ENCODE measurements at regions of chr4 and their contacts with region 1.

Region 1: DNA sequence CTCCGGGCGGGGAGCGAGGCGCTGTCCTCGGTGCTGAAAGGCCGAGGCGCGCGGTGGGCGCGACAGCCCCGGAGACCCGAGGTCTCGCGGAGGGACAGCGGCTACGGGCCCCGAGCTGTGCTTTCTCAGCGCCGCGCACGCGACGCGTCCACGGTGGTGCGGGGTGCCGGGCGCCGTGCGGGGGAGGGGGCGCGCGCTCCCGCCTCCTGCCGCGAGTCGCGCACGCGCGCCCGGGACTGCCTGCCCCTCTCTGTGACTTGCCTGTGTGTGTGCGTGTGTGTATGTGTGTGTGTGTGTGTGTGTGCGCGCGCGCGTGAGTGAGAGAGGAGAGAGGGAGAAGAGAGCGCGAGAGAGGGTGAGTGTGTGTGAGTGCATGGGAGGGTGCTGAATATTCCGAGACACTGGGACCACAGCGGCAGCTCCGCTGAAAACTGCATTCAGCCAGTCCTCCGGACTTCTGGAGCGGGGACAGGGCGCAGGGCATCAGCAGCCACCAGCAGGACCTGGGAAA is at the start of gene GRIA2:
- DNase-seq: peak; percentile 72 to 92
- ATAC-seq: peak; percentile 88
- H3K4me3 ChIP-seq: peak within 1 kb of the TSS; percentile 13 to 75
- H3K27ac ChIP-seq: peak within 1 kb of the TSS; percentile 79 to 83
- H3K4me1 ChIP-seq: no peaks in the 10 kb centered on the region
- H3K27me3 ChIP-seq: no peaks in the 10 kb centered on the region
- total RNA-seq, gene GRIA2: 19.2 to 23.5 TPM

Region 2: DNA sequence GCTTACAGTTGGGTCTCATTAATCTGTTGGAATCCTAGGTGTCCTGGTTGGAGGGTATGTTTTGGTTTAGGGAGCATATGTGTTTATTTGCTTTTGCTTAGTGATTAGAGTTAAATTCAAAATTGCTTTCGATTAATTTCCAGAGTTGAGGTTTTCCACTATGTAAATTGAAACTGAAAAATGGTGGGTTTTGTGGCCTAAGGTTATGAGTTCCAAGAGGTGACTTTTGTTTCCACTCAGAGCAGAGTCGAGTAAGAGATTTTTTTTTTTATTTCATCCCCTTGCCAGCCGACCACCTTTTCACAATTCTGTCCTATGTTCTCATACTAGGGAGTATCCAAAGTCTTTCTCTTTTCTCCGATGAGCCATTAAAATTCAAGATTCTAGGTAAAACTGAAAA is 67.0 kb after region 1 on chr4:
- intact Hi-C with region 1: loop called in 1 of 2 experiments (anchors 5 kb)
- DNase-seq: no peak
- ATAC-seq: no peak
- H3K4me3 ChIP-seq: no peak overlapping the region
- H3K27ac ChIP-seq: no peak overlapping the region
- H3K4me1 ChIP-seq: no peaks in the 10 kb centered on the region
- H3K27me3 ChIP-seq: no peaks in the 10 kb centered on the region

Region 3: GRCh38 chr4:157358439-157358838 is 138.0 kb after region 1 on chr4:
- intact Hi-C with region 1: loop called in 1 of 2 experiments (anchors 5 kb)
- DNase-seq: no peak
- ATAC-seq: no peak
- H3K4me3 ChIP-seq: no peak overlapping the region
- H3K27ac ChIP-seq: no peak overlapping the region
- H3K4me1 ChIP-seq: no peaks in the 10 kb centered on the region
- H3K27me3 ChIP-seq: no peaks in the 10 kb centered on the region

Region 4: GRCh38 chr4:157804986-157805385 is 584.6 kb after region 1 on chr4:
- intact Hi-C with region 1: loop called (anchors 10 kb)
- DNase-seq: no peak
- ATAC-seq: peak; percentile 62
- H3K4me3 ChIP-seq: no peak overlapping the region
- H3K27ac ChIP-seq: peak overlapping the region; percentile 5 to 90
- H3K4me1 ChIP-seq: peaks cover 1 to 9% of the 10 kb centered on the region in 2 donors
- H3K27me3 ChIP-seq: no peaks in the 10 kb centered on the region

Region 5: GRCh38 chr4:157978680-157979361 is 758.4 kb after region 1 on chr4:
- intact Hi-C with region 1: loop called (anchors 1 to 5 kb)
- DNase-seq: peak; percentile 62 to 84
- ATAC-seq: peak; percentile 85
- H3K4me3 ChIP-seq: peak overlapping the region; percentile 26 to 69
- H3K27ac ChIP-seq: no peak overlapping the region
- H3K4me1 ChIP-seq: no peaks in the 10 kb centered on the region
- H3K27me3 ChIP-seq: no peaks in the 10 kb centered on the region